ENCODE measurements at regions of chr2 and their contacts with region 1.

Region 1: GRCh38 chr2:12716282-12717190 is at the start of gene TRIB2:
- DNase-seq: peak; percentile 92 to 94
- ATAC-seq: peak; percentile 76 to 94 (median 82)
- H3K4me3 ChIP-seq: peak within 1 kb of the TSS; percentile 73 to 97 (median 84)
- H3K27ac ChIP-seq: peak within 1 kb of the TSS; percentile 97 to 99 (median 99)
- H3K4me1 ChIP-seq: peaks cover 0 to 43% (median 36%) of the 10 kb centered on the region in 9 donors
- H3K27me3 ChIP-seq: peaks cover 0 to 16% (median 0%) of the 10 kb centered on the region in 7 donors
- CTCF ChIP-seq: peak in 4 of 9 donors; percentile 11 to 43 (median 26)
- total RNA-seq, gene TRIB2: 26.7 to 46.6 (median 36.5) TPM

Region 2: GRCh38 chr2:11829947-11830707 is 886.4 kb before region 1 on chr2:
- intact Hi-C with region 1: loop called in 7 of 10 experiments (anchors 1 to 10 kb)
- DNase-seq: peak; percentile 51 to 69
- ATAC-seq: peak; percentile 78 to 93 (median 89)
- H3K4me3 ChIP-seq: peak overlapping the region in 7 of 10 donors; percentile 25 to 45 (median 29)
- H3K27ac ChIP-seq: peak overlapping the region; percentile 21 to 90 (median 75)
- H3K4me1 ChIP-seq: peaks cover 8 to 47% (median 29%) of the 10 kb centered on the region in 9 donors
- H3K27me3 ChIP-seq: no peaks in the 10 kb centered on the region
- CTCF ChIP-seq: peak in 6 of 9 donors; percentile 20 to 58 (median 44)

Region 3: GRCh38 chr2:12169721-12170120 is 546.8 kb before region 1 on chr2:
- intact Hi-C with region 1: loop called in 6 of 10 experiments (anchors 5 to 10 kb)
- DNase-seq: peak; percentile 18 to 77
- ATAC-seq: peak; percentile 68 to 94 (median 80)
- H3K4me3 ChIP-seq: no peak overlapping the region
- H3K27ac ChIP-seq: peak overlapping the region in 8 of 10 donors; percentile 34 to 85 (median 62)
- H3K4me1 ChIP-seq: peaks cover 18 to 33% (median 27%) of the 10 kb centered on the region in 9 donors
- H3K27me3 ChIP-seq: no peaks in the 10 kb centered on the region
- CTCF ChIP-seq: no peak

Region 4: DNA sequence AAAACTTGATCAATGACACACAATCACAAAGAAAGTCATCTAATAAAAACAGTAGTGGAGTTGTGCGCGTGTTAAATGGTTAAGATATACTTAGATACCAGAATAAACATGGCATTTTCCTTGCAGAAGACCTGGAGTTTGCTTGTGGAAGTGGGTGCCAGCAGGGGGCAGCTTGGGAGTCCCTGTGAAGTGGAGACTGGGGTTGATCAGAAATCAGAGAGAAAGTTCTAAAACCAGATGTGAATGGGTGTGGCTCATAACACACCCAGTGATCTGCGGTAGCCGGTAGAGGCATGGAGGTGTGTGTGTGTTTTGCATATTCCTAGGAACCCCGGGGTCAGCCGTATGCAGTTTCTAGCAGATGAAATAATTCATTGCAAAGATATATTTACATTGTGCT is 299.9 kb before region 1 on chr2:
- intact Hi-C with region 1: loop called in 7 of 10 experiments (anchors 2 to 10 kb)
- DNase-seq: peak; percentile 40 to 61
- ATAC-seq: peak in 5 of 8 donors; percentile 52 to 65 (median 57)
- H3K4me3 ChIP-seq: no peak overlapping the region
- H3K27ac ChIP-seq: no peak overlapping the region
- H3K4me1 ChIP-seq: peaks cover 0 to 19% (median 0%) of the 10 kb centered on the region in 9 donors
- H3K27me3 ChIP-seq: no peaks in the 10 kb centered on the region
- CTCF ChIP-seq: peak; percentile 24 to 71 (median 59)

Region 5: DNA sequence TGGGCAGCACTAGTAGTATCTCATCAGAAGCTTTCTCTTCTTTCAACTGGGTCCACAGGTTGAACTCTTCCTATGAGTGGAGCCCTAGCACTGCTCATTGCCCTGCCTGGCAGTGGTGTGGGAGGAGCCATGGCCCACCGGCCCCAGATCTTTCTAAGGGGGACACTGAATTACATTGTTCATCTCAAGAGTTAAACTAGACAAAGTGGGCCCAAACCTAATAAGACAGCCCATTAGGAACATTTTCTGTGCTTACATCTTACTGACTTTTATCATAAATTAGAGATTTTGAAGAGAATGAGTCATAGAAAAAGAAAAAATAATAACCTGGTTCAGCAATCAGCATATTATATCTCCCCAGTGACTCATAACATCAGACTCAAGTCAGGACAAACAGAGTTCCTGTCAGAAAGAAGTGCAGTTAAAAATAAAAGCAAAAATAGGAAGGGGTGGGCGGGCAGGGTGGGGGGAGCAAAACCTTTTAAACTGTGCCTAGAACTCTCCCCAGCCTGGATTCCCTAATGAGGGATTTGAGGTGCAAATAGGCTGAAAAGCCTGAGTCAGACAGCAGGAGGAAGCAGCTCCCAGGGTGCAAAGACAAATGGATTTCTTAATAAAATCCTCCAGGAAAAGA is 161.4 kb before region 1 on chr2:
- intact Hi-C with region 1: loop called in 4 of 10 experiments (anchors 5 to 10 kb)
- DNase-seq: no peak
- ATAC-seq: peak in 6 of 8 donors; percentile 42 to 76 (median 57)
- H3K4me3 ChIP-seq: no peak overlapping the region
- H3K27ac ChIP-seq: peak overlapping the region in 7 of 10 donors; percentile 16 to 61 (median 43)
- H3K4me1 ChIP-seq: peaks cover 5 to 28% (median 14%) of the 10 kb centered on the region in 9 donors
- H3K27me3 ChIP-seq: no peaks in the 10 kb centered on the region
- CTCF ChIP-seq: peak in 4 of 9 donors; percentile 10 to 39 (median 32)

Region 6: DNA sequence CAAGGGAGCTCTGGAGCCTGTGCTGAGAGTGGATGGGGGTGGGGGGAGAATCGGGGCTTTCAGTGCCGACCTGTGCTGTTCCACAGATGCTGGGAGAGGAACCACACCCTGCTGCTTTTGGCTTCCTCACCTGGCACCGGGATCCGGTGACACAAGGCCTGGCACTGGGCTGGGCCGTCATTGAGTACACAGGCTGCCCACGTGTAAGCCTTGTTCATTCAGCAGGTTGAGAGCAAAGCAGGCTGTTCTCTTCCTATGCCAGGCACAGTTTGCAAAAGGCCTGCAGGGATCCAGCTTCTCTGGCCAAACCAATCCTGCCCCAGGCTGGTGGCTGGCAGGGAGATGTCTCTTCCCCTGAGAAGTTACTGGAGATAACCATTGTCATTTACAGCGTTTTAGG is 17.3 kb after region 1 on chr2:
- intact Hi-C with region 1: no loop called
- DNase-seq: peak in 1 of 2 donors; percentile 68
- ATAC-seq: peak; percentile 29 to 86 (median 48)
- H3K4me3 ChIP-seq: no peak overlapping the region
- H3K27ac ChIP-seq: peak overlapping the region; percentile 7 to 89 (median 78)
- H3K4me1 ChIP-seq: peaks cover 31 to 99% (median 85%) of the 10 kb centered on the region in 9 donors
- H3K27me3 ChIP-seq: no peaks in the 10 kb centered on the region
- CTCF ChIP-seq: no peak

Region 7: GRCh38 chr2:12807907-12808810 is 91.6 kb after region 1 on chr2:
- intact Hi-C with region 1: loop called in 2 of 10 experiments (anchors 5 kb)
- DNase-seq: peak in 1 of 2 donors; percentile 23
- ATAC-seq: peak; percentile 46 to 92 (median 76)
- H3K4me3 ChIP-seq: no peak overlapping the region
- H3K27ac ChIP-seq: peak overlapping the region; percentile 28 to 87 (median 67)
- H3K4me1 ChIP-seq: peaks cover 10 to 70% (median 42%) of the 10 kb centered on the region in 9 donors
- H3K27me3 ChIP-seq: no peaks in the 10 kb centered on the region
- CTCF ChIP-seq: no peak

Region 8: GRCh38 chr2:12931186-12931844 is 214.8 kb after region 1 on chr2:
- intact Hi-C with region 1: loop called in 9 of 10 experiments (anchors 1 to 5 kb)
- DNase-seq: peak in 1 of 2 donors; percentile 45
- ATAC-seq: peak; percentile 78 to 88 (median 86)
- H3K4me3 ChIP-seq: no peak overlapping the region
- H3K27ac ChIP-seq: peak overlapping the region in 7 of 10 donors; percentile 0 to 59 (median 7)
- H3K4me1 ChIP-seq: peaks cover 7 to 53% (median 39%) of the 10 kb centered on the region in 9 donors
- H3K27me3 ChIP-seq: no peaks in the 10 kb centered on the region
- CTCF ChIP-seq: peak; percentile 80 to 96 (median 92)

Measured in heart right ventricle (tissue), 16 donors.